PC-9 (cell line): ENCODE measurements at regions of chr1 and their contacts with region 1.

Region 1: DNA sequence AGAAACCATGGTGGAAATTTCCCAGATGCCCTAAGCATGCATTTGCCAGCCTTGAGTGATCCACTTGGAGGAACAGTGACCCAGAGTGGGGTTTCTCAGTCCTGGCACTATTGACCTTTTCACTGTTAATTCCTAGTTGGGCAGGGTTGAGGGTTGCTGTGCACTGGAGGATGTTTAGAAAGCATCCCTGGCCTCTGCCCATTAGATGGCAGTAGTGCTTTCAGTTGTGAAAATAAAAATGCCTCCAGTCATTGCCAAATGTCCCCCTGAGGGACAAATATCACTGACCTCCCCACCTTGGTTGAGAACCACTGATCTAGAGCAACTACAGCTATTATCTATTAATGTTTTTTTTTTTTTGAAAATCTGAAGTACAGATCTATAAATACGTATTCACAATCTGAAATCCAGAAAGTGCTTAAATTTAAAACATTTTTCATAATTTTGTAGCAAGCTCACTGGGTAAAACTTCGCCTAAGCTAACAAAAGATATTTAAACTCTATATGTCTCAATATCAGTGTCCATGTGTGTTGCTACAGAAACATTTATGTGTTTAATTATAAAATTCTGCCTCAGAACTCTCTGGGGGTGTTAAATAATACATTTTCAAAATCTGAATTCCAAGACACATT is 27.3 kb downstream of the F3 start:
- DNase-seq: peak; percentile 34 to 66
- H3K4me3 ChIP-seq: no peak overlapping the region
- H3K27ac ChIP-seq: peak overlapping the region; percentile 21; the same call in 1 of the 2 replicates
- H3K4me1 ChIP-seq: peaks cover 11% of the 10 kb centered on the region
- H3K27me3 ChIP-seq: no peaks in the 10 kb centered on the region
- CTCF ChIP-seq: peak; percentile 91

Region 2: GRCh38 chr1:94125551-94126514 is 388.4 kb before region 1 on chr1:
- CTCF ChIA-PET with region 1: no interaction called
- POLR2A ChIA-PET with region 1: no interaction called
- intact Hi-C with region 1: no loop called
- DNase-seq: no peak
- H3K4me3 ChIP-seq: no peak overlapping the region
- H3K27ac ChIP-seq: no peak overlapping the region
- H3K4me1 ChIP-seq: peaks cover 8% of the 10 kb centered on the region
- H3K27me3 ChIP-seq: no peaks in the 10 kb centered on the region
- CTCF ChIP-seq: no peak

Region 3: DNA sequence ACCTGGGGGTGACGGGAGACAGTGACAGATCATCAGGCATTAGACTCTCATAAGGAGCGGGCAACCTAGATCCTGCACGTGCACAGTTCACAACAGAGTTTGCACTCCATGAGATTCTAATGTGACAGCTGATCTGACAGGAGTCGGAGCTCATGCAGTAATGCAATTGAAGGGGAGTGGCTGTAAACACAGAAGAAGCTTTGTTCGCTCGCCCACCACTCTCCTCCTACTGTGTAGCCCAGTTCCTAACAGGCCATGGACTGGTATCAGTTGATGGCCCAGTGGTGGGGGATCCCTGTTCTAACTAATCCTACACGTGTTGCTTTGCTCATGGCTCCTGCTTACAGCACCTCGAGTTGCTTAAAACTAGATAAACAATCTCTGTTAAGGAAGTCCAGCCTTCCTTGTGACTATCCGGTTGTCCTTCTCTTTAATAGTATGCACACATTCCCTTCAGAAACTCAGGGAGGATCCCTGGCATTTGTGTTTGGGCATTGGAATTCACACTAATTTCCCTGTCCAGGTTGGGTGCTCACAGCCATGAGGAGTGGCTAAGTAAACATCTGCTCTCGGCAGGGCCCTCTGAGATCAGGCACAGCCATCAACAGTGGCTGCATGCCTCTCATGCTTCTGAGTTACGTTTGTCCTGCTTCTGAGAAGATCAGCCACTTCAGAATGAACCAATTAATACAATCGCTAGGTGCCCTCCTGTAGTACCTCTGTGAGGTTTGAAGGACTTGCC is 48.5 kb after region 1 on chr1:
- CTCF ChIA-PET with region 1: no interaction called
- POLR2A ChIA-PET with region 1: no interaction called
- intact Hi-C with region 1: no loop called
- DNase-seq: peak; percentile 75 to 94
- H3K4me3 ChIP-seq: no peak overlapping the region; the same call in 1 of the 2 replicates
- H3K27ac ChIP-seq: peak overlapping the region; percentile 65
- H3K4me1 ChIP-seq: peaks cover 39% of the 10 kb centered on the region
- H3K27me3 ChIP-seq: no peaks in the 10 kb centered on the region
- CTCF ChIP-seq: no peak

Region 4: GRCh38 chr1:94832446-94832845 is 318.2 kb after region 1 on chr1:
- CTCF ChIA-PET with region 1: no interaction called
- POLR2A ChIA-PET with region 1: interaction called, 16 read pairs
- intact Hi-C with region 1: no loop called
- DNase-seq: no peak
- H3K4me3 ChIP-seq: no peak overlapping the region
- H3K27ac ChIP-seq: no peak overlapping the region
- H3K4me1 ChIP-seq: no peaks in the 10 kb centered on the region
- H3K27me3 ChIP-seq: no peaks in the 10 kb centered on the region
- CTCF ChIP-seq: no peak